ENCODE measurements at regions of chr3 and their contacts with region 1.

Region 1: GRCh38 chr3:119145500-119146191 is at the start of gene TEX55:
- DNase-seq: peak; percentile 49
- ATAC-seq: peak; percentile 90 to 92
- total RNA-seq, gene TEX55: not detected

Region 2: GRCh38 chr3:119206611-119207511 is 61.2 kb after region 1 on chr3:
- intact Hi-C with region 1: loop called in 1 of 2 experiments (anchors 10 kb)
- DNase-seq: peak; percentile 54
- ATAC-seq: peak; percentile 81 to 92

Region 3: GRCh38 chr3:119937229-119937628 is 791.6 kb after region 1 on chr3:
- intact Hi-C with region 1: no loop called
- DNase-seq: no peak
- ATAC-seq: peak in 1 of 2 donors; percentile 38